ENCODE measurements at regions of chr21 and their contacts with region 1.

Region 1: DNA sequence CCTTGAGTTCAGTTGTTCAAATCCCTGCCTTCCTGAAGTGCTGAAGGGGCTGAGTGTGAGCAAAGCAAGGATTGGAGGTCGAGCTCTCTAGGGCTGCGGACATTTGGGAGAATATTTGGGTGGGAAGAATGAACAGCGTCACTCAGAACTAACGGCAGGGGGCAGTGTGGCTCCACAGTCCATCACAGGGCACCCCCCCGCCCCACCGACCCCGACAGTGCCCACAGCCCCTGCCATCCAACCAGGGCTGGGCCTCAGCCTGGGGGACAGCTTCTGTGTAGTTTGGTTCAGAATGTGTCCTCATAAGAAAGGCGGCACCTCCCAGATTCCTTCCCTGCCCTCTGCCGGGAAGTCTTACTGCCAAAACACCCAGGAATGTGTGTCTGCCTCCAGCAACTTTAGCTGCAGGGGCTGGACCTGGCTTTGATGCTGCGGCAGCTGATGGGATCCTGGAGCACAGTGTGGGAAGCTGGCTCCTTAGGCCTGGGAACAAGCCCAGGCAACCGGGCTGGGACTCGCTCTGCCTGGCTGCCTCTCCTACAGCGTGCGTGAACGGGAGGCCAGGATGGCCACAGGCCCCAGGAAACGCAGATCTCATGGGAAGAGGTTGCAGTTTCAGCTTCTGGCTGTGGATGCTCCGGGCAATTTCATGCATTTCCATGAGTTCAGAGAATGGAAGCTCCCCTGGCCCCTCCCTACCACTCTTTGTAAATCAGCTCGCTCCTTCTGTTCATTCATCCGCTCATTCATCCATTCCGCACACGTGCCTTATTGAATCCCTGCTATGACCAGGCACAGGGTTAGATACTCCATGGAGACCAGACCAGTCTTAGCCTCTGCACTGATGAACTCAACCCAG is 104.9 kb upstream of the TMPRSS2 start:
- DNase-seq: no peak
- H3K4me3 ChIP-seq: no peak overlapping the region
- H3K27ac ChIP-seq: peak overlapping the region; percentile 72 to 88 (median 76)
- H3K4me1 ChIP-seq: peaks cover 31 to 60% (median 43%) of the 10 kb centered on the region in 3 donors
- H3K27me3 ChIP-seq: peaks cover 0 to 17% (median 0%) of the 10 kb centered on the region in 4 donors
- CTCF ChIP-seq: peak; percentile 44 to 80 (median 71)
- POLR2A ChIP-seq: no peak

Region 2: DNA sequence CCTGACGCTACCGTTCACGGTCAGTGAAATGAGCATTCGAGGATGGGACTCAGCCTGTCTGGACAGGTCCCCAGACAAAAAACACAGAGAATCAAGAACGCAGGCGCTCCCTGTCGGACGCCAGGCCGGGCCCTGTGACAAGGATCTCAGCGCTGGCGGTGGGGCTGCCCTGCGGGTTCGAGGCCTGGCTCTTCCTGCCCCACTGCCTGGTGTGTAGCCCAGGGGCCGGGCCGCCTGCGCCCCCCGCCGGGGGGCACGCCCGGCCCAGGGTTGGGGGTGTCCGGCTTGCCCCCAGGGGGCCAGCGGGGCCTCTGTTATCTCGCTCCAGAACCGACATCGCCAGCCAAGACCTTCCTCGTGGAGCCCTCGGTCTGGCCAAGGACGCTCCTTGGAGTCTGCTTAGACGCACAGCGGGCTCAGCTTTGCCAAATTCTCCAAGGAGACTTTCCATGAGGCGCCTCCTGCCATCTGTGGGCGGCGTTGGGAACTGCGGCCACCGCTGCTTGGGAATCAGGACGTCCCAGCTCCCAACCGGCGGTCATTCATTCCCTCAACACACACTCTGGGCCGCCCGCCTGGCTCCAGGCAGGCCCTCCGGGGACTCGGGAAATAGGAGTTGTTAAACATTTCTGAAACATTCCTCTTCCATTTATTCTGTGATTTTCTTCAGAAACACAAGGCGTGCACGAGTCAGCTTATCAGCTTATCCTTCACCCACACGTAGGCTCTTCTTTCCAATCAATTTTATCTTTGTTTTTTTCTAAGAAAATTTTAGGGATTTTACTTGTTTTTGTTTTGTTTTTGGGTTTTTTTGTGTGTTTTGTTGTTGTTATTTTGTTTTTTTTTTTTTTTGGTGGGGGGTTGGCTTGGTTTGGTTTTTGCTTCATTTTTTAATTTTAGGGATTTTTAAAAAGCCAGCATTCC is 165.3 kb after region 1 on chr21:
- intact Hi-C with region 1: loop called (anchors 5 kb)
- DNase-seq: no peak
- H3K4me3 ChIP-seq: peak overlapping the region in 2 of 4 donors; percentile 18 to 45
- H3K27ac ChIP-seq: peak overlapping the region; percentile 70 to 92 (median 84)
- H3K4me1 ChIP-seq: peaks cover 7 to 63% (median 13%) of the 10 kb centered on the region in 3 donors
- H3K27me3 ChIP-seq: peaks cover 0 to 85% (median 0%) of the 10 kb centered on the region in 4 donors
- CTCF ChIP-seq: peak; percentile 51 to 97 (median 94)
- POLR2A ChIP-seq: no peak

Region 3: DNA sequence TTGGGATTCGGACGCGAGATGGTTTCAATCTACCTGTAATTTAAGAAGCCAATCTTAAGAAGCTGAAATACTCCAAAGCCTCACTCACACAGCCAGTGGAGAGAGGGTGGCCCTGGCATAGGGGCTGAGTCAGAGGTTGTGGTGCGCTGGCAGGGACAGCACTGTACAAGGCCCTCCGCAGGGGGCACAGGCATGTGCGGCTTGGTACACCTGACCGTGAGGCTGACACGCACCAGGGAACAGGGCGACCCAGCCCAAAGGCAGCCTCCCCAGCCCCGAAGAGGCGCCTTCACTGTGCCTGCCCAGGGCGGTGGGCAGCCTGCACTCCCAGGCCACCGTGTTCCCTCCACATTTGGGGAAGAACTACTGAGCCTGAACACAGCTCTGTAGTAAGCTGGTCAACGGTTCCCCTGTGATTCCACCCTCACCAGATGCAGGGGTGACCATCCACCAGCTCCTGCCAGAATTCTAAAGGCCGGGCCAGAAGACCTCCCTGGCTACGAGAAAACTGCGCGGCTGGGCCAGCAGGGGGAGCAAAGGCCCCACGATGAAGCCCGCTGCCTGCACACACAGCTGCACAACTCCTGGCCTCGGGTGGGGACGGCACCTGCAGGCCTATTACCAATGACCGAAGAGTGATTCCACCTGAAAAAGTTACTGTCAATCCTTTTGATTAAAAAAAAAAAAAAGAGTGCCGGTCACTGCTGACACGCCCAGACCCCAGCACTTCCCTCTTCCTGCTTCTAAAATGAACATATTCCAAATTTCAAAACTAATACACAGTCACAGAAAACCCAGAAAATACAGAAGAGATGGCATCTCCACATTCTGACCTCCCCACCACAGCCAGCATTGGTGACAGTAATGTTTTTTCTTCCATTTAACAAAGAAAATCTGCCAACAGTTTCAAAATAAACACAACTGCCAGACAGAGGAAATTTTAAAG is 203.6 kb after region 1 on chr21:
- intact Hi-C with region 1: loop called (anchors 5 kb)
- DNase-seq: no peak
- H3K4me3 ChIP-seq: no peak overlapping the region
- H3K27ac ChIP-seq: peak overlapping the region in 2 of 4 donors; percentile 6 to 30
- H3K4me1 ChIP-seq: peaks cover 0 to 8% (median 0%) of the 10 kb centered on the region in 3 donors
- H3K27me3 ChIP-seq: no peaks in the 10 kb centered on the region
- CTCF ChIP-seq: peak in 5 of 6 experiments; percentile 67 to 72 (median 70)
- POLR2A ChIP-seq: no peak

Measured in esophagus squamous epithelium (tissue), 5 donors.